ENCODE measurements at regions of chr1 and their contacts with region 1.

Region 1: DNA sequence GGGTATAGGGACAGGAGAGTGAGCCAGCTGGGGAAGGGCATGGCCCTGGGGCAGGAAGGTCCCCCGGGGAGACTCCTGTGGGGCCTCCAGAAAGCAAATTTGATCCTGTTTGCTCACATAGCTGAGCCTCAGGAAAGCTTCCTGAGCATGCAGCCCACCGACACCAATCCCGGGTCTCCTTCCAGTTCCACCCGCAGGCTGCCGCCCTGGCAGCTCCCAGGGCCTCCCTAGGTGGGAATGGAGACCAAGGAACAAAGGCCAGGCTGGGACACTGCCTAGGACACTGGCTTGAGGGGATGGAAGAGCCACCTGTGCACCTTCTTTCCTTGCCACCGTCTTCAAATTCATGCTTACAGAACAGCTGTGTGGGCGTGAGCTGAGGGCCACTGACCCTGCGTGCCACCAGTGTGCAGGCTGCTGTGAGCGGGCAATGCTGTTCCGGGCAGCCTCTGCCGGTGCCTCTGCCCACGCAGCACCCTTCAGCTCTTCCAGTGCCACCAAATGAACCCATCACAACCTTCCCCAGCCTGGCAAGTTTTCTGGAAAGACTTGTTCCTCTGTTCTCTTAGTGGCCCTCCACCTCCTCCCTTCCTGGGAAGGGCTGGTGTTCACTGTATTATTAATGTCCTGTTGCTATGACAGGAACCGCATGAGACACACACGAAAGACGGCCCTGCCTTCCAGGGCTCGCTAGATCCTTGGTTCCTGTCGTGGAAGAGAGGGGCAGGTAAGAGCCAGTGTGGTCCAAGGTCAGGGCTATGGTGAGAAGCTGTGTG is 53.6 kb downstream of the ACBD3 start:
- DNase-seq: no peak
- ATAC-seq: no peak
- H3K4me3 ChIP-seq: no peak overlapping the region; a peak in 1 of 6 replicates
- H3K27ac ChIP-seq: no peak overlapping the region
- H3K4me1 ChIP-seq: peaks cover 62% of the 10 kb centered on the region
- H3K27me3 ChIP-seq: no peaks in the 10 kb centered on the region
- CTCF ChIP-seq: no peak
- EP300 ChIP-seq: no peak
- POLR2A ChIP-seq: no peak
- RAD21 ChIP-seq: no peak

Region 2: DNA sequence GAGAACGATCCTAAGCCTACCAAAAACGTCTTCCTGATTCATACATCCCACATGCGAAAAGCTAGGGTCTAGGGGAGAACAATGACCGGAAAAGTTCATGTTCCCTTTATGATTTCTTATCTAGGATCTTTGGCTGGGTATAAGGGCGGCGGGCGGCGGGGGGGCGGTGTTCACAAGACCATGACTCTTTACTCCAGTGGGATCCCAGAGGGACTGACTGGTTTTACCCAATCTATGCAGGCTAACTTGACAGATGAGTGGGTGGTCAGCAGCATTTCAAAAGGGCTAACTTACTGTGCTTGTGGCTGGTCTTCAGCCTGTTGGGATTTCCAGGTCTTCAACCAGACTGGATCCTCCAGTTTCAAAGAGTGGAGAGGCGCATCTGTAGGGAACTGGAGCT is 1476.5 kb before region 1 on chr1:
- CTCF ChIA-PET with region 1: no interaction called
- POLR2A ChIA-PET with region 1: no interaction called
- in situ Hi-C with region 1: no loop called
- intact Hi-C with region 1: no loop called
- DNase-seq: no peak
- ATAC-seq: no peak
- H3K4me3 ChIP-seq: no peak overlapping the region
- H3K27ac ChIP-seq: no peak overlapping the region
- H3K4me1 ChIP-seq: no peaks in the 10 kb centered on the region
- H3K27me3 ChIP-seq: peaks cover 0 to 11% of the 10 kb centered on the region in 2 experiments; a peak in 1 of 5 replicates
- CTCF ChIP-seq: no peak
- EP300 ChIP-seq: no peak
- POLR2A ChIP-seq: no peak
- RAD21 ChIP-seq: no peak

Region 3: GRCh38 chr1:226034482-226034881 is 98.4 kb before region 1 on chr1:
- CTCF ChIA-PET with region 1: no interaction called
- POLR2A ChIA-PET with region 1: no interaction called
- in situ Hi-C with region 1: no loop called
- intact Hi-C with region 1: no loop called
- DNase-seq: peak; percentile 32
- ATAC-seq: peak; percentile 93
- H3K4me3 ChIP-seq: no peak overlapping the region
- H3K27ac ChIP-seq: no peak overlapping the region
- H3K4me1 ChIP-seq: peaks cover 4% of the 10 kb centered on the region
- H3K27me3 ChIP-seq: peaks cover 1 to 5% of the 10 kb centered on the region in 2 experiments; a peak in 1 of 5 replicates
- CTCF ChIP-seq: no peak
- EP300 ChIP-seq: no peak
- POLR2A ChIP-seq: no peak
- RAD21 ChIP-seq: no peak

Region 4: GRCh38 chr1:226083302-226084101 is 49.4 kb before region 1 on chr1:
- CTCF ChIA-PET with region 1: no interaction called
- POLR2A ChIA-PET with region 1: interaction called, 13 read pairs
- in situ Hi-C with region 1: no loop called
- intact Hi-C with region 1: no loop called
- DNase-seq: peak; percentile 56
- ATAC-seq: peak; percentile 84
- H3K4me3 ChIP-seq: peak overlapping the region; percentile 56 to 74 (median 73)
- H3K27ac ChIP-seq: no peak overlapping the region
- H3K4me1 ChIP-seq: peaks cover 14% of the 10 kb centered on the region
- H3K27me3 ChIP-seq: peaks cover 0 to 6% of the 10 kb centered on the region in 2 experiments; a peak in 2 of 5 replicates
- CTCF ChIP-seq: no peak
- EP300 ChIP-seq: no peak
- POLR2A ChIP-seq: peak in 1 of 2 experiments; percentile 68; a peak in 2 of 4 replicates
- RAD21 ChIP-seq: no peak

Region 5: DNA sequence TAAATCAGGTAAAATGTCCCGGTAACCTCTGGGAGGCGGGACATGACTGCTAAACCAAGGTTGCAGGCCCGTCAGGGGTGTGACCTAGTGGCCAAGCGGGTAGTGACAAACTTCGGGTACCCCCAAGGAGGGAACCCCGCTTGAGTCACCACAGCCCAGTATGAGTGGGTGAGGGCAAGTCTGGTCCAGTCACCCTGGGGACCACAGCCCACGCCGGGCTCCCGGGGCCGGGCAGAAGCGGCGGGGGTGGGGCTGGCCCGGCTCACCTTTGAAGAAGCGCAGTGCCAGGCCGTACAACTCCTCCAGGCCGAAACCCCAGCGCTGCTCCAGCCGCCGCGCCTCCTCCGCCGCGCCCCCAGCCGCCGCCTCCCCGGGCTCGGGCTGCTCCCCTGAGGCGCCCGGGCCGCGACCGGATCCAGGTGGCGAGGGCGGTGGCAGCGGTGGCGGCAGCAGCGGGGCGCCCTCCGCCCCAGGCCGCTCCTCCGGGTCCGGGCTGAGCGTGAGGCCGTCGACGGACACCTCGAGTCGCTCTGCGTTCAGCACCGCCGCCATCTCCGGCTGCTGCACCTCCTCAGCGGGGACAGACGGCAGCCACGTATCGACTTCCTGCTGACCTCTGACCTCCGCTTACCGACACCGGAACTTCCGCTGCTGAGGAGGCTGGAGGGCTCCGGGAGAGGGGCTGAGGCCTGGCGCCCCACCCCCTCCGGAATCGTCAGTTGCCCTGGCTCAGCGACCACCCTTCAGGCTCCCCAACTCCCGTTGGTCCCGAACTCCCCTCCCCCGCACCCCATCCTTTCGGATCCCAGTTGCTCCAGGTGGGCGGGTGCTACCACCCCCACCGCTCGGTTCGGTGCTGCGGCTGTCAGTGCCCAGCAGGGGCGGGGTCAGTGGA is 53.5 kb after region 1 on chr1 and contains the start of gene ACBD3:
- CTCF ChIA-PET with region 1: no interaction called
- POLR2A ChIA-PET with region 1: interaction called, 4 read pairs
- in situ Hi-C with region 1: loop called (anchors 5 kb)
- intact Hi-C with region 1: no loop called
- DNase-seq: peak; percentile 85
- ATAC-seq: peak; percentile 97
- H3K4me3 ChIP-seq: peak within 1 kb of the TSS; percentile 87 to 97 (median 90)
- H3K27ac ChIP-seq: peak within 1 kb of the TSS; percentile 74
- H3K4me1 ChIP-seq: peaks cover 40% of the 10 kb centered on the region
- H3K27me3 ChIP-seq: no peaks in the 10 kb centered on the region; a peak in 1 of 5 replicates
- CTCF ChIP-seq: peak; percentile 8; the same call in 1 of the 2 replicates
- EP300 ChIP-seq: no peak
- POLR2A ChIP-seq: peak; percentile 95
- RAD21 ChIP-seq: no peak; the same call in 1 of the 2 replicates
- total RNA-seq, gene ACBD3: 39.3 and 59.0 TPM in 2 replicates

Region 6: DNA sequence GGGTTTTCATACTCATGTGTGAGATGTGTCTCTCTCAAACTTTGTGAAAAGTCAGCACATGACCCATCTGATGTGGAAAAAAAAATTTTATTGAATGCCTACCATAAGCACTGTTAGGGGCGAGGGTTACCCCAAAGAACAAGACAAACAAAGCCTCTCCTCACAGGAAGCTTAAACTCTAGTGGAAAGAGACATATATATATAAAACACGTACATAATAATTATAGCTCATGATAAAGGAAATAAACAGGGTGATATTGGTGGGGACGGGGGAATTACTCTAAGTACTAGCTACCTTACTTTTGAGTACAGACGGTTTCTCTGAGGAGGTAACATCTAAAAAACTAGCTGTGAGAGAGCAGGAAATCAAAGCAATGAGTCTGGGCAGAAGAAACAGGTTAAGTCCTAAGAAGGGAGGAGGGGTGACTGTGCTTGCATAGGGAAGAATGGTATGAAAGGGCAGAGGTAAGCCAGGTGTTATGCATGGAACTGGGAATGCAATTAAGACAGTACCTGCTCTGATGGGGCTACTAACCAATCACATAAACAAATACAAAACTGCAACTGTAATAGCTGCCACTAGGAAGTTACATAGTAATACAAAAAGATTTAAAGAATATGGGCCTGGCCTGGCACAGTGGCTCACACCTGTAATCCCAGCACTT is 171.5 kb after region 1 on chr1:
- CTCF ChIA-PET with region 1: no interaction called
- POLR2A ChIA-PET with region 1: no interaction called
- in situ Hi-C with region 1: no loop called
- intact Hi-C with region 1: no loop called
- DNase-seq: no peak
- ATAC-seq: no peak
- H3K4me3 ChIP-seq: no peak overlapping the region
- H3K27ac ChIP-seq: no peak overlapping the region
- H3K4me1 ChIP-seq: peaks cover 17% of the 10 kb centered on the region
- H3K27me3 ChIP-seq: no peaks in the 10 kb centered on the region
- CTCF ChIP-seq: no peak
- EP300 ChIP-seq: no peak
- POLR2A ChIP-seq: no peak
- RAD21 ChIP-seq: no peak